Activated T-helper 1 cell treated with anti-CD3 and anti-CD28 coated beads, Interleukin-12 subunit alpha, Interleukin-12 subunit beta, Interleukin-2, Interleukin-4 antibody, amounts not matched to agents 30 ng/mL and 10 ng/mL and 1 ng/mL, durations not matched to agents 14 hours and 24 hours and 36 hours (primary cell): ENCODE measurements at regions of chr17 and their contacts with region 1.

Region 1: DNA sequence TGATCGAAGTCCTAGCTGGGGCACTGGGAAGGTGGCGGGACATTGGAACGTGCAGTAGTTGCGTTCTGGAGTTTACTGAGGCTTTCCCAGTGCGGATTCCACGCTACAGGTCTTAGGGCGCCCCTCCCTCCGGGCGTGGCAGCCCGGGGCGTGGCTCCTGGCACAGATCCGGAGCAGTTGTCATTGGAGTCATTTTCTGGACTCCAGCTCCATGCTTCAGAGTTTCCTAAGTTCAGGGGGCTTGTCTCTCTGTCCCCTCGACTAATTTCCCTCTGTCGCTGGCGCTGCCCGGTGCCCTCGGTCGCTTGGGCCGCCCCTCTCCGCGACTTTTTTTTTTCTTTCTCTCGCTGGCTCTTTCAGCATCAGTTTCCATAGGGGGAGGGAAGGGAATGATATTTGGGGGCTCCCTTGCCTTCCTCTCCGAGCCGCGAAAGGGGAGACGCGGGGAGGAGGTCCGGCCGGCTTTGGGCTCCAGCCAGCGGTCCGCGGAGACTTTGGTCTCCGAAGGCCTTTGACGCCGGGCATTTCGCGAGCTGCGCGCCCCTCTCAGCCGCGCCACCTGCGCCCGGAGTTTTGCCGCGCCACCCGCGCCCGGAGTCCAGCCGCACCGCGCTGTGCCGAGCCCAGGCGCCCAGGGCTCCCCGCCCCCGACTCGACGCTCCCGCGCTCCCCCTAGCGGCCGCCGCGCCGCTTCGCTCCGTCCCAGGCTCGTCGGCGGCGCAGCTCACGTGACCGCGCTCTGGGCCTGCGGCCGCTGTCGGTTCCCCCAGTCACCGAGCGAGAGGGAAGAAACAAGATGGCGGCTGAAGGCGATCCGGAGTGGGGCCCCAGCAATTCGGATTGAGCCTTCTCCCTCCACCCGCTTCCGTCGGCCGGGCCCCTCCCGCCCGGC is at the start of gene BPTF:
- DNase-seq: peak; percentile 91
- H3K4me3 Mint-ChIP-seq: peak within 1 kb of the TSS; percentile 95
- H3K27ac Mint-ChIP-seq: peak within 1 kb of the TSS; percentile 99
- H3K4me1 Mint-ChIP-seq: peaks cover 39% of the 10 kb centered on the region
- H3K27me3 Mint-ChIP-seq: peaks cover 19% of the 10 kb centered on the region
- total RNA-seq, gene BPTF: 76.6 and 78.4 TPM in 2 replicates

Region 2: DNA sequence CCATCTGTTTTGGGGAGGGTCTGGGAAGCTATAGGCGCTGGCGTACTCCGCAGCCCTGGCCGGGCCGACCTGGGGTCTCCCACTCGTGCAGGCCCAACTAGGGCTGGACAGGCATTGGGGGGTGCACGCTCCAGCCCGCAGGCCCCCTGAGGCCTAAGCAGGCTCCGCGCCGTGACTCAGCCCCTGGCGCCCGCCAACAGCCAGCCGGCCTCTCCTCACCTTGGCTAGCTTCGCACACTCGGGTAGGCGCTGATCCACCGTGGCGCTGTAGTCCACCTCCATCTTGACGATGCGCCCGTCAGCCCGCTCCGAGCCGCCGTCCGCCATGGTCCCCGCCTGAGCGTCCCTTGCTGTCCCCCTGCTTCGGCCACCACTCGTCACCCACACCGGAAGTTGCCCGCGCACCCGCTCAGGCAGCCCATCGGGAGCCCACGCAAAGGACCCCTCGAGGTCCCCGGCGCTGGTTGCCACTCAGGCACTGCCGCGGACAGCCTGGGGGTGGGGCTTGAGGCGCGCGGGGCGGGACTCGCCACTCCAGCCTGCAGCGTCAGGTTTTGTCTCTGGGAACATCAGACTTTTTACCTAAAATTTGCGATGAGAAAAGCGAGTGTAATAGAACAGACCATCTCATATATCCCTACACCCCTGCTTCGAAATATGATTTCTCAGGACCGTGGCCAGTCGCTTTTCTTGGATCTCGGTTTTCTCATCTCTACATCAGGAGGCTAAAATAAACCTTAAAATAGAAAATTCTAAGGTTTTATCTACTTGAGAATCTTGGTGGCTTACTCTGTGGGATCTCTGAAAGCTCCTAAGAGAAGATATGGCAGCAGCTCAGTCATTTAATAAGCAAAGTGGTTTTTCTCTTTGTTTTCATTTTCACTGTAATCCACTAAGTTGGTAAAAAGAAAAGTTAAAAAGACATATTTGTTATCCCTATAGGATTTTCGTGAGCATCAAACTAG is 458.5 kb before region 1 on chr17 and contains the start of gene PSMD12:
- intact Hi-C with region 1: loop called (anchors 2 kb)
- DNase-seq: peak; percentile 92
- H3K4me3 Mint-ChIP-seq: peak within 1 kb of the TSS; percentile 96
- H3K27ac Mint-ChIP-seq: peak within 1 kb of the TSS; percentile 94
- H3K4me1 Mint-ChIP-seq: peaks cover 52% of the 10 kb centered on the region
- H3K27me3 Mint-ChIP-seq: no peaks in the 10 kb centered on the region
- total RNA-seq, gene PSMD12: 87.4 TPM in 2 replicates

Region 3: DNA sequence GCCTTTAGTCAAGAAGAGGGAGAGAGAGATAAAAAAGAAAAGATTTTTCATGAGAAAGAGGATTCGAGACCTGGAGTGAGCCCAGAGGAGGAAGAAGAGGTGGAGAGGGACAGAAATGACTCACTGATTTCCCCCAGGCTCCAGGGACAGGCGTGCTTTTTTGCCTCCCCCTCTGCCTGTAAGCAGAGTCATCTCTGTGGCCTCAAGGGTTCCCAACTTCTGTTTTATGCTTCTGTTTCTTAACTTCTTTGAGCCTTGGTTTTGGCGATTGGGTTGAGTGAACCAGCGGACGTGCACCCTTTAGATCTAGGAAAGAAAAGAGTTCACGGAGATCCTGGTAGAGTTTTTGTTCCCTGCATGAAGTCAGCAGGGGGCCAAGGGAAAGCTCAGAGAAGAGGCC is 255.1 kb before region 1 on chr17:
- intact Hi-C with region 1: no loop called
- DNase-seq: no peak
- H3K4me3 Mint-ChIP-seq: no peak overlapping the region
- H3K27ac Mint-ChIP-seq: no peak overlapping the region
- H3K4me1 Mint-ChIP-seq: no peaks in the 10 kb centered on the region
- H3K27me3 Mint-ChIP-seq: no peaks in the 10 kb centered on the region

Region 4: GRCh38 chr17:67867591-67867990 is 42.6 kb after region 1 on chr17:
- intact Hi-C with region 1: loop called (anchors 5 kb)
- DNase-seq: no peak
- H3K4me3 Mint-ChIP-seq: no peak overlapping the region
- H3K27ac Mint-ChIP-seq: peak overlapping the region; percentile 18
- H3K4me1 Mint-ChIP-seq: peaks cover 29% of the 10 kb centered on the region
- H3K27me3 Mint-ChIP-seq: no peaks in the 10 kb centered on the region

Region 5: GRCh38 chr17:68035523-68036303 is 210.7 kb after region 1 on chr17 and contains the start of gene KPNA2:
- intact Hi-C with region 1: loop called (anchors 1 kb)
- DNase-seq: peak; percentile 93
- H3K4me3 Mint-ChIP-seq: peak within 1 kb of the TSS; percentile 96
- H3K27ac Mint-ChIP-seq: peak within 1 kb of the TSS; percentile 97
- H3K4me1 Mint-ChIP-seq: peaks cover 23% of the 10 kb centered on the region
- H3K27me3 Mint-ChIP-seq: no peaks in the 10 kb centered on the region
- total RNA-seq, gene KPNA2: 205 and 224 TPM in 2 replicates

Region 6: GRCh38 chr17:68247445-68248198 is 422.6 kb after region 1 on chr17 and contains the start of gene AMZ2:
- intact Hi-C with region 1: loop called (anchors 10 kb)
- DNase-seq: peak; percentile 98
- H3K4me3 Mint-ChIP-seq: peak within 1 kb of the TSS; percentile 88
- H3K27ac Mint-ChIP-seq: peak within 1 kb of the TSS; percentile 96
- H3K4me1 Mint-ChIP-seq: peaks cover 49% of the 10 kb centered on the region
- H3K27me3 Mint-ChIP-seq: no peaks in the 10 kb centered on the region
- total RNA-seq, gene AMZ2: 67.3 and 75.7 TPM in 2 replicates